ENCODE measurements at regions of chr11 and their contacts with region 1.

Region 1: DNA sequence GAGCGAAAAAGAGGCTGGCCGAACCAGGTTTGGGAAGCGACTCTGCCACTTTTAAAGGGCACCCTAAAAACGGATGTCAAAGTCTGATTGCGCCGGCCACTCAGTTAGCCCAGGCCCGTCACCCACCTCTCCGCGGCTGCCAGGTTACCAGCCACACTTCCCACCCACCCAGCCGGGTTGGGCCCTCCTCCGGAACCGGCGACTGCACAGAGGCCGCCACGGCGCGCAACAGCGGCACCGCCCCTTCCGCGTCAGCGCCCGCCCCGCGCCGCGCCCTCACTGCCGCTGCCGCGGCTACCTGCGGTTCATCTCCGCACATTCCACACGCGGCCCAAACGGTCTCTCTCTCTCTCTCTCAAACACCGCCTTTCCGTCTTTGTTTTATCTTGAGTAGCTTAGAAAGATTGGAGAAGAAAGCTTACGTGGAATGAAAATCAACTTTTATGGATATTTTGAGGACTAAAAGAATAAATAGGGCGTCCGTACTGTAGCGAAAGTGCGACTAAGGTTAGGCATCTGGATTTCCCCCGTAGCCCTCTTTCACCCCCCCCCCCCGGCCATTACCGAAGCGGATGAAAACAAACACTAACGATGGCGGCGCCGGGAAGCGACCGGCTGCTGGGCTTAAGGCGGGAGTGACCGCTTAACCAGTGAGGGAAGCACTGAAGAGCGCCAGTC is at the starts of genes ATG13 and HARBI1:
- DNase-seq: peak; percentile 91
- ATAC-seq: peak; percentile 94
- H3K4me3 Mint-ChIP-seq: peak within 1 kb of the TSS; percentile 93
- H3K27ac Mint-ChIP-seq: peak within 1 kb of the TSS; percentile 100
- H3K4me1 Mint-ChIP-seq: peaks cover 30% of the 10 kb centered on the region
- H3K27me3 Mint-ChIP-seq: no peaks in the 10 kb centered on the region
- CTCF ChIP-seq: no peak
- total RNA-seq, gene ATG13: 49.1 and 73.7 TPM in 2 replicates
- total RNA-seq, gene HARBI1: 5.4 and 6.5 TPM in 2 replicates

Region 2: DNA sequence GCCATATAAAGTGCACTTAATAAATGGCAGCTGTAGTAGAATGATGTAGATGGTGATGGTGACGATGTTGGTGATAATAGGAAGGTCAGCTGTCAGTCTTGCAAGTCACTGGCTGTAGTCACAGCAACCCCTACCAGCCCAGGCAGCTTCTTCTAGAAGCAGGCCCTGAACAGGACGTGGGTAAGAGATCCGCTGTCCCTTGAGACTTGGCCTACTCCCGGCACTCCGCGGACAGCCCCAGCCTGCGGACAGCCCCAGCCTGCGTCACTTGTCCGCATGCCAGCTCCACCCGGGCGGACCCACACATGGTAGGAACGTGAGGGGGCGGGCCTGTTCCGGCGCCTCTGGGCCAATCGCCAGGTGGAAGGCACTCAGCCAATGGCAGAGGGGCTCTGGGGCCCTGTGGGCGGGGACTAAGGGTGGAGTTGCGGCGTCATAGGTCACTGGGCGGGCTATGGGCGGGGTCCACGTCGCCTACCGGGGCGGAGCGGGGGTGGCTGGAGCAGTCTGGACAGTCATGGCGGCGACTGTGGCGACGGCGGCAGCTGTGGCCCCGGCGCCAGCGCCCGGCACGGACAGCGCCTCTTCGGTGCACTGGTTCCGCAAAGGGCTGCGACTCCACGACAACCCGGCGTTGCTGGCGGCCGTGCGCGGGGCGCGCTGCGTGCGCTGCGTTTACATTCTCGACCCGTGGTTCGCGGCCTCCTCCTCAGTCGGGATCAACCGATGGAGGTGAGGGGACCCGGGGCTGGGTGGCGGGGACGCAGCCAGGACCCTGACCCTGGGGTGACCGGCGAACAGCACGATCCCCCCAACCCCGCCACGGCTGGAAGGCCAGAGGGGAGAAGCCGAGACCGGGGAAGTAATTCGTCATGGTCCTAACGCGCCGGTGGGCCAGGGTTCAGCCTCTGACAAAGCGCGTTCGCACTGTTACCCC is 769.9 kb before region 1 on chr11 and contains the start of gene CRY2:
- CTCF ChIA-PET with region 1: no interaction called
- POLR2A ChIA-PET with region 1: no interaction called
- intact Hi-C with region 1: loop called (anchors 10 kb)
- DNase-seq: peak; percentile 97
- ATAC-seq: peak; percentile 89
- H3K4me3 Mint-ChIP-seq: peak within 1 kb of the TSS; percentile 85
- H3K27ac Mint-ChIP-seq: peak within 1 kb of the TSS; percentile 94
- H3K4me1 Mint-ChIP-seq: peaks cover 68% of the 10 kb centered on the region
- H3K27me3 Mint-ChIP-seq: no peaks in the 10 kb centered on the region
- CTCF ChIP-seq: no peak
- total RNA-seq, gene CRY2: 47.5 and 56.8 TPM in 2 replicates

Region 3: GRCh38 chr11:46238967-46239800 is 378.0 kb before region 1 on chr11:
- CTCF ChIA-PET with region 1: interaction called, 5 read pairs
- POLR2A ChIA-PET with region 1: interaction called, 4 read pairs
- intact Hi-C with region 1: loop called (anchors 1 kb)
- DNase-seq: peak; percentile 80
- ATAC-seq: peak; percentile 73
- H3K4me3 Mint-ChIP-seq: peak overlapping the region; percentile 64
- H3K27ac Mint-ChIP-seq: no peak overlapping the region
- H3K4me1 Mint-ChIP-seq: peaks cover 32% of the 10 kb centered on the region
- H3K27me3 Mint-ChIP-seq: peaks cover 39% of the 10 kb centered on the region
- CTCF ChIP-seq: peak; percentile 89

Region 4: DNA sequence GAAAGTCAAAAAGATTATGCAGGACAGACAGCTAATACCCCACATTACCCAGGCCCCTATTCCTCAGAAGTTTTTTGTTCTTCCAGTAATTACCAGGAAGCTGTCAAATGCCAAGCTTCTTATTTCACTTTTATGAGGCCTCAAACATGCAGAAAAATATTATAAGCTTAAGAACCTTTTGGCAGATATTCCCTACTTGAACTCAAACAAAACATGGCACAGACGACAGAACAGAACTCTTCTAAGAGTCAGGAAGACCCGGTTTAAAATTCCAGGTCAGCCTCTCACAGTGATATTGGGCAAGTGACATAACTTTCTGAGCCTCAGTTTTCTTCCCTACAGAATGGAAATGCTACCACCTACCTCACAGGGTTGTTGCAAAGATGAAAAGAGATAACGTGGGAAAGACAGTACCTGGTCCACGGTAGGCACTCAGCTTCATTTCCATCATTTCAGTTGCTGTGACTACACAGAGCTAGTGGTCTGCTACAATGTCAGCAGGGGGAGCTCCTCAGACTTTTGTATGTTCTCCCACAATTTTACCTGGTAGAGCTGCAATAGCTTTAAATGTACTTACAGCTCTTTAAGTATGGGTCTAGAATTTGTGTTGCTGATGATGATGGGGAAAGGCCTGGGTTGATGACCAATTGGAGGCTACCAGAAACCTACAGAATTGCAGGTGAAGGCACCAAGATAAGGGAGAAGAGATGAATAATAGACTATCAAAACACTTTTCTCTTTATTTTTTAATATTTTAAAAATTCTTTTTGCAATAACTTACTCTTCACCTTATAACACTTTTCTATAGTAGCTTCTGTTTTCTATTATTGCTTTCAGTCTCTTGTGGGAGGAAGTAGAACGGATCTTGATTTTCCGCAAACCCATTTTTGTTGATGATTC is 127.2 kb before region 1 on chr11:
- CTCF ChIA-PET with region 1: interaction called, 20 read pairs
- POLR2A ChIA-PET with region 1: interaction called, 13 read pairs
- intact Hi-C with region 1: loop called (anchors 1 kb)
- DNase-seq: no peak
- ATAC-seq: peak; percentile 50
- H3K4me3 Mint-ChIP-seq: no peak overlapping the region
- H3K27ac Mint-ChIP-seq: no peak overlapping the region
- H3K4me1 Mint-ChIP-seq: peaks cover 25% of the 10 kb centered on the region
- H3K27me3 Mint-ChIP-seq: no peaks in the 10 kb centered on the region
- CTCF ChIP-seq: no peak

Region 5: DNA sequence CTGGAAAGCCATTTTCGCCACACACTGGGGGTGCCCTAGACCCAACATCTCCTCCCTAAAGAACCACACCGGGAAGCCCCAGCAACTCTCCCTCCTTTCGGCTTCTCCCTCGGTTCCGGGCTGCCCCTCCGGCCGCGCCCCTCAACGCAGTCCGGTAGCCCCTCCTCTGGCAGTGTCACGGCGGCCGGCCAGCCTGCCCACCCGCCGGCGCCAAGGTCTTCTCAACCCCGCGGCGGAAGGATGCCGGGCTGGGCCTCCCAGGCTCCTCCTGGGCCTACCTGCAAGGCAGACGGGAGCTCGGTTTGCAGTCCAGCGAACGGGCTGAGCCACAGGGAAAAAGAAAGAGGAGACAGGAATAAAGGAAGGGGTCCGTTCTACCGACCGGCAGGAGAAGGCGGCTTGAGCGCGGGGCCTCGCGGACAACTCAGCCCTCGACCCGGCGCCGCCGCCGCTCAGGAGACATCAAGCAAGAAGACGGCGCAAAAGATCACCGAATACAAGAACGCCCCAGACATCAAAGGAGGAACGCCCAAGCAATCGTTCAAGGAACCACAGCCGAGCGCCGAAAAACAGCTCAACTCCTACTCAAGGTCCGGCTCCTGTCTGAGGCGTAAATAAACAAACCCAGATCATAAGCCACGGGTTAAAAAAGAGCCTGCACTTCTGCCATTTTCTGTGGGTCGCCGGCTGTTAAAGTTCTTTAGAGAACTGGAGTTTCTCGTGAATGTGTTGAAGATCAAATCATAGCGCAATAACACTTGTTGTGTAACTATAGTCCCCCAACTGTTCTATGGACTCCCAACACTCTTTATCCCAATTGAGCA is 23.4 kb before region 1 on chr11 and contains the start of gene AMBRA1:
- CTCF ChIA-PET with region 1: interaction called, 3 read pairs
- POLR2A ChIA-PET with region 1: interaction called, 18 read pairs
- intact Hi-C with region 1: loop called (anchors 1 kb)
- DNase-seq: peak; percentile 77
- ATAC-seq: peak; percentile 93
- H3K4me3 Mint-ChIP-seq: peak within 1 kb of the TSS; percentile 97
- H3K27ac Mint-ChIP-seq: peak within 1 kb of the TSS; percentile 88
- H3K4me1 Mint-ChIP-seq: peaks cover 43% of the 10 kb centered on the region
- H3K27me3 Mint-ChIP-seq: no peaks in the 10 kb centered on the region
- CTCF ChIP-seq: no peak
- total RNA-seq, gene AMBRA1: 35.5 and 39.1 TPM in 2 replicates

Region 6: GRCh38 chr11:46845740-46846509 is 228.8 kb after region 1 on chr11 and contains the start of gene CKAP5:
- CTCF ChIA-PET with region 1: no interaction called
- POLR2A ChIA-PET with region 1: no interaction called
- intact Hi-C with region 1: loop called (anchors 1 kb)
- DNase-seq: peak; percentile 77
- ATAC-seq: peak; percentile 88
- H3K4me3 Mint-ChIP-seq: peak within 1 kb of the TSS; percentile 96
- H3K27ac Mint-ChIP-seq: peak within 1 kb of the TSS; percentile 88
- H3K4me1 Mint-ChIP-seq: peaks cover 33% of the 10 kb centered on the region
- H3K27me3 Mint-ChIP-seq: no peaks in the 10 kb centered on the region
- CTCF ChIP-seq: no peak
- total RNA-seq, gene CKAP5: 50.4 and 52.9 TPM in 2 replicates